IMR-90 (cell line): ENCODE measurements at regions of chr12 and their contacts with region 1.

Region 1: GRCh38 chr12:7188562-7189397 is 706 bp upstream of the PEX5 start:
- DNase-seq: peak; percentile 82
- ATAC-seq: peak; percentile 58
- H3K4me3 ChIP-seq: peak overlapping the region; percentile 69
- H3K27ac ChIP-seq: peak overlapping the region; percentile 76
- H3K4me1 ChIP-seq: peaks cover 7% of the 10 kb centered on the region
- H3K27me3 ChIP-seq: no peaks in the 10 kb centered on the region
- CTCF ChIP-seq: peak; percentile 73
- POLR2A ChIP-seq: peak; percentile 29
- RAD21 ChIP-seq: peak; percentile 72

Region 2: GRCh38 chr12:7142056-7142644 is 46.6 kb before region 1 on chr12:
- CTCF ChIA-PET with region 1: interaction called, 3 read pairs
- POLR2A ChIA-PET with region 1: no interaction called
- dilution Hi-C with region 1: no loop called
- in situ Hi-C with region 1: no loop called
- intact Hi-C with region 1: loop called (anchors 1 kb)
- DNase-seq: peak; percentile 39
- ATAC-seq: peak; percentile 91
- H3K4me3 ChIP-seq: no peak overlapping the region
- H3K27ac ChIP-seq: no peak overlapping the region
- H3K4me1 ChIP-seq: peaks cover 2% of the 10 kb centered on the region; the same call in 1 of the 2 replicates
- H3K27me3 ChIP-seq: no peaks in the 10 kb centered on the region
- CTCF ChIP-seq: peak; percentile 71
- POLR2A ChIP-seq: no peak
- RAD21 ChIP-seq: peak; percentile 58

Region 3: GRCh38 chr12:7241404-7242005 is 52.7 kb after region 1 on chr12:
- CTCF ChIA-PET with region 1: no interaction called
- POLR2A ChIA-PET with region 1: no interaction called
- dilution Hi-C with region 1: no loop called
- in situ Hi-C with region 1: no loop called
- intact Hi-C with region 1: no loop called
- DNase-seq: peak; percentile 57
- ATAC-seq: no peak
- H3K4me3 ChIP-seq: no peak overlapping the region
- H3K27ac ChIP-seq: no peak overlapping the region
- H3K4me1 ChIP-seq: no peaks in the 10 kb centered on the region
- H3K27me3 ChIP-seq: no peaks in the 10 kb centered on the region; the same call in 1 of the 2 replicates
- CTCF ChIP-seq: no peak
- POLR2A ChIP-seq: no peak
- RAD21 ChIP-seq: no peak

Region 4: GRCh38 chr12:7832059-7832696 is 643.4 kb after region 1 on chr12:
- CTCF ChIA-PET with region 1: no interaction called
- POLR2A ChIA-PET with region 1: interaction called, 19 read pairs
- dilution Hi-C with region 1: no loop called
- in situ Hi-C with region 1: no loop called
- intact Hi-C with region 1: no loop called
- DNase-seq: peak; percentile 71
- ATAC-seq: peak; percentile 97
- H3K4me3 ChIP-seq: no peak overlapping the region
- H3K27ac ChIP-seq: no peak overlapping the region
- H3K4me1 ChIP-seq: no peaks in the 10 kb centered on the region
- H3K27me3 ChIP-seq: peaks cover 1% of the 10 kb centered on the region; the same call in 1 of the 2 replicates
- CTCF ChIP-seq: peak; percentile 71
- POLR2A ChIP-seq: no peak
- RAD21 ChIP-seq: peak; percentile 77